ENCODE measurements at regions of chr15 and their contacts with region 1.

Region 1: GRCh38 chr15:98421419-98422129 is 226.8 kb upstream of the IGF1R start:
- DNase-seq: peak; percentile 78 to 94
- ATAC-seq: peak; percentile 92
- H3K4me3 ChIP-seq: no peak overlapping the region
- H3K27ac ChIP-seq: no peak overlapping the region
- H3K4me1 ChIP-seq: no peaks in the 10 kb centered on the region
- H3K27me3 ChIP-seq: peaks cover 0 to 2% of the 10 kb centered on the region in 2 donors

Region 2: DNA sequence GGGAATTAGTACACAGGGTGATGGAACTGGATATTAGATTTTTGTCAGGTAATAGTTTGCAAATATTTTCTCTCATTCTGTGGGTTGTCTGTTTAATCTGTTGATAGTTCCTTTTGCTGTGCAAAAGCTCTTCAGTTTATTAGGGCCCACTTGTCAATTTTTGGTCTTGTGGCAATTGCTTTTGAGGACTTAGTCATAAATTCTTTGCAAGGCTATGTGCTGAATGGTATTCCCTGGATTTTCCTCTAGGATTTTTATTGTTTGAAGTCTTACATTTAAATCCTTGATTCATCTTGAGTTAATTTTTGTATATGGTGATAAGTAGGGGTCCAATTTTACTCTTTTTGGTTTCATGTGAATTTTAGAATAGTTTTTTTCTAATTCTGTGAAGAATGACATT is 349.8 kb before region 1 on chr15:
- intact Hi-C with region 1: no loop called
- DNase-seq: no peak
- ATAC-seq: no peak
- H3K4me3 ChIP-seq: no peak overlapping the region
- H3K27ac ChIP-seq: no peak overlapping the region
- H3K4me1 ChIP-seq: no peaks in the 10 kb centered on the region
- H3K27me3 ChIP-seq: no peaks in the 10 kb centered on the region

Region 3: GRCh38 chr15:98085003-98085639 is 336.5 kb before region 1 on chr15:
- intact Hi-C with region 1: loop called in 1 of 2 experiments (anchors 5 kb)
- DNase-seq: no peak
- ATAC-seq: no peak
- H3K4me3 ChIP-seq: no peak overlapping the region
- H3K27ac ChIP-seq: no peak overlapping the region
- H3K4me1 ChIP-seq: peaks cover 0 to 1% of the 10 kb centered on the region in 2 donors
- H3K27me3 ChIP-seq: no peaks in the 10 kb centered on the region

Region 4: GRCh38 chr15:98311566-98312188 is 109.9 kb before region 1 on chr15:
- intact Hi-C with region 1: loop called (anchors 1 to 2 kb)
- DNase-seq: peak; percentile 81 to 89
- ATAC-seq: peak; percentile 82
- H3K4me3 ChIP-seq: peak overlapping the region in 1 of 2 donors; percentile 14
- H3K27ac ChIP-seq: no peak overlapping the region
- H3K4me1 ChIP-seq: no peaks in the 10 kb centered on the region
- H3K27me3 ChIP-seq: no peaks in the 10 kb centered on the region

Region 5: GRCh38 chr15:99507504-99508310 is 1086.1 kb after region 1 on chr15:
- intact Hi-C with region 1: no loop called
- DNase-seq: peak in 1 of 2 donors; percentile 72
- ATAC-seq: peak; percentile 67
- H3K4me3 ChIP-seq: no peak overlapping the region
- H3K27ac ChIP-seq: peak overlapping the region; percentile 10 to 93
- H3K4me1 ChIP-seq: no peaks in the 10 kb centered on the region
- H3K27me3 ChIP-seq: no peaks in the 10 kb centered on the region